GM12878 (cell line): ENCODE measurements at regions of chr7 and their contacts with region 1.

Region 1: GRCh38 chr7:130063036-130063435 is 7.3 kb upstream of the KLHDC10 start:
- DNase-seq: no peak
- ATAC-seq: peak; percentile 87
- H3K4me3 ChIP-seq: no peak overlapping the region
- H3K27ac ChIP-seq: no peak overlapping the region
- H3K4me1 ChIP-seq: no peaks in the 10 kb centered on the region
- H3K27me3 ChIP-seq: no peaks in the 10 kb centered on the region
- CTCF ChIP-seq: peak; percentile 55 to 80 (median 74)
- EP300 ChIP-seq: no peak
- POLR2A ChIP-seq: no peak
- RAD21 ChIP-seq: peak; percentile 75

Region 2: GRCh38 chr7:130047821-130048220 is 15.2 kb before region 1 on chr7:
- CTCF ChIA-PET with region 1: interaction called, 17 read pairs
- POLR2A ChIA-PET with region 1: no interaction called
- RAD21 ChIA-PET with region 1: no interaction called
- SMC1A ChIA-PET with region 1: interaction called, 4 read pairs
- in situ Hi-C with region 1: no loop called
- intact Hi-C with region 1: no loop called
- DNase-seq: no peak
- ATAC-seq: no peak
- H3K4me3 ChIP-seq: no peak overlapping the region
- H3K27ac ChIP-seq: no peak overlapping the region
- H3K4me1 ChIP-seq: no peaks in the 10 kb centered on the region
- H3K27me3 ChIP-seq: no peaks in the 10 kb centered on the region
- CTCF ChIP-seq: no peak
- EP300 ChIP-seq: no peak
- POLR2A ChIP-seq: no peak
- RAD21 ChIP-seq: no peak

Region 3: DNA sequence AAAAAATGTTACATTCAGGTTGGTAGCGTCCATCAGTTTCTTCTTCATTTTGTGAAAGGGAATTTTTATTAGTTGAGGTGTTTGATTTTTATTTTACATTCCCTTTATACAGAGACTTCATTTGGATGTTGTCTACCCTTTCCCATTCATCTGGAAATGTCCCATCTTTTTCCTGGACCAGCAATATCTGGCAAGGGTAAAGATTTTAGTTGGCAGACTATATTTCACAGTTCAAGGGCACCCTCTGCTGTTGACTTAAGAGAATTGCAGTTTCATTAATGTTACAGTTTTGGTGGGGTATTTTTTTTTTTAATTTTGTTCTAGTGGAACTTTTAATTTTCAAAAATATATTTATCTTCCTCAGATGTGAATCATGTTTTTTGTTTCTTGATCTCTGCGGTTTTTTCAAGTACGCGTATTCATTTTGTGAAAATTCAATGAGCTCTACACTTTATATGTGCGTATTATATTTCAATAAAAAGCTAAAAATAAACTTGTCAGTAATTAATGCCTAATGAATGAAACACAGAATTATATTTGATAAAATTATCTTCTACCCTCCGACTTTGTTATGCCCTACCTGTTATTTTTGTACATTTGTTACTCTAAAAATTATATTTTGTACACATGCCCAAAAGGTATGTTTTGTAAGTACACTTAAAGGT is 768.9 kb after region 1 on chr7:
- CTCF ChIA-PET with region 1: interaction called, 9 read pairs
- POLR2A ChIA-PET with region 1: no interaction called
- RAD21 ChIA-PET with region 1: interaction called, 5 read pairs
- SMC1A ChIA-PET with region 1: no interaction called
- in situ Hi-C with region 1: no loop called
- intact Hi-C with region 1: loop called (anchors 1 kb)
- DNase-seq: no peak
- ATAC-seq: no peak
- H3K4me3 ChIP-seq: no peak overlapping the region
- H3K27ac ChIP-seq: no peak overlapping the region
- H3K4me1 ChIP-seq: no peaks in the 10 kb centered on the region
- H3K27me3 ChIP-seq: no peaks in the 10 kb centered on the region
- CTCF ChIP-seq: peak; percentile 58 to 68 (median 68)
- EP300 ChIP-seq: no peak
- POLR2A ChIP-seq: no peak
- RAD21 ChIP-seq: peak; percentile 88